Transverse colon (tissue), 4 donors: ENCODE measurements at regions of chr5 and their contacts with region 1.

Region 1: DNA sequence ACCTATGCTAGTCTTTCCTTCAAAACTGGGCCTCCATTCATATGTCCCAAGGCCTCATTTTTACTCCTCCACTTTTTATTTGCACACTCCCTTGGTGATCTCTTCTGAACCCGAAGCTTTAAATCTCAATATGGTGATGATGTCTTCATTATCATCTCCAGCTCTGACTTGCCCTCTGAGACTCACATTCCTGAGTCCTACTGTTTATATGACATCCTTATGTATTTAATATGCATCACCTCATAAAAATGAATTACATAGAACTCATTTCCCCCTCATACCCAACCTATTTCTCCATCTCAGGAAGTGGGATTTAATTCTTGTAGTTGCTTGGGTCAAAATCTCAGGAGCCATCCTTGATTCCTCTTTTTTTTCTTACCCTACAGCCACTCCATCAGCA is 473.0 kb downstream of the EBF1 start:
- DNase-seq: no peak
- H3K4me3 ChIP-seq: no peak overlapping the region
- H3K27ac ChIP-seq: no peak overlapping the region
- H3K4me1 ChIP-seq: no peaks in the 10 kb centered on the region
- H3K27me3 ChIP-seq: no peaks in the 10 kb centered on the region
- CTCF ChIP-seq: no peak
- EP300 ChIP-seq: no peak
- POLR2A ChIP-seq: no peak

Region 2: GRCh38 chr5:158602981-158603380 is 23.7 kb before region 1 on chr5:
- in situ Hi-C with region 1: no loop called
- intact Hi-C with region 1: loop called (anchors 1 kb)
- DNase-seq: no peak
- H3K4me3 ChIP-seq: no peak overlapping the region
- H3K27ac ChIP-seq: no peak overlapping the region
- H3K4me1 ChIP-seq: no peaks in the 10 kb centered on the region
- H3K27me3 ChIP-seq: no peaks in the 10 kb centered on the region
- CTCF ChIP-seq: no peak
- EP300 ChIP-seq: no peak
- POLR2A ChIP-seq: no peak